ENCODE measurements at regions of chr6 and their contacts with region 1.

Region 1: GRCh38 chr6:42158011-42158410 is 15.2 kb upstream of the GUCA1A start:
- DNase-seq: peak in 1 of 2 experiments; percentile 46
- H3K4me3 ChIP-seq: no peak overlapping the region
- H3K27ac ChIP-seq: no peak overlapping the region
- H3K4me1 ChIP-seq: peaks cover 16% of the 10 kb centered on the region
- H3K27me3 ChIP-seq: no peaks in the 10 kb centered on the region
- CTCF ChIP-seq: no peak

Region 2: DNA sequence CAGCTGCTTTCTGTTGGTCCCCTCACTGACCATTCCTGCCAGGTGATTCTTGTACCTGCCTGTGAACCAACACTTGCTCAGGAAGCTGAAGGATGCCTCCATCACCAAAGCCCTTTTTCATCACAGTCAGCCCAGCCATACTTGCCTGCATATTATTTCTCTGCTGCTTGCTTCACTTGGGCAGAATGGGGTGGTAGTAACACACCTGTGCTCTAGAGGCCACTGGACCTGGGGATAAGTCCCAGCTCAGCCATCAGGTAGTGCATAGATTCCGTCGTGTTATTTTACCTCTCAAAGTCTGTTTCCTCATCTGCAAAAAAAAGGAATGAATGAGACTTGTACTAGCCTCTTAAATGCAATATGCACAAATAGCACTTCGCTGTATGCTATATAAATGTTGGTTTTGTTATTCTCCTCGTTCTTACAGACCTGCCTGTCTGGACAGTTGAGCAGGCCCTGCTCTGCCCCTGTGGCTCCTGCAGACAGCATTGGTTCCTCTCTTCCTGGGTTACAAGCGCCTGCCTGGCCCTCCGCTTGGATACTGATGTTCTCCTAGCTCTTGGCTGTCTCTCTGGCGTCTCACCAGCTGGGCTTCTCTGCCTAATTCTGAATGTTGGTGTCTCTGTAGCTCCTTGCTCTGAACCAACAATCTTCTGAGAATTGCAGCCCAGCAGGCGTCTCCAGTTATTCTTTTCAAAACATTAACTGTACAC is 1270.8 kb before region 1 on chr6:
- CTCF ChIA-PET with region 1: no interaction called
- POLR2A ChIA-PET with region 1: no interaction called
- intact Hi-C with region 1: no loop called
- DNase-seq: no peak
- H3K4me3 ChIP-seq: no peak overlapping the region
- H3K27ac ChIP-seq: no peak overlapping the region
- H3K4me1 ChIP-seq: no peaks in the 10 kb centered on the region
- H3K27me3 ChIP-seq: peaks cover 91% of the 10 kb centered on the region
- CTCF ChIP-seq: no peak

Region 3: DNA sequence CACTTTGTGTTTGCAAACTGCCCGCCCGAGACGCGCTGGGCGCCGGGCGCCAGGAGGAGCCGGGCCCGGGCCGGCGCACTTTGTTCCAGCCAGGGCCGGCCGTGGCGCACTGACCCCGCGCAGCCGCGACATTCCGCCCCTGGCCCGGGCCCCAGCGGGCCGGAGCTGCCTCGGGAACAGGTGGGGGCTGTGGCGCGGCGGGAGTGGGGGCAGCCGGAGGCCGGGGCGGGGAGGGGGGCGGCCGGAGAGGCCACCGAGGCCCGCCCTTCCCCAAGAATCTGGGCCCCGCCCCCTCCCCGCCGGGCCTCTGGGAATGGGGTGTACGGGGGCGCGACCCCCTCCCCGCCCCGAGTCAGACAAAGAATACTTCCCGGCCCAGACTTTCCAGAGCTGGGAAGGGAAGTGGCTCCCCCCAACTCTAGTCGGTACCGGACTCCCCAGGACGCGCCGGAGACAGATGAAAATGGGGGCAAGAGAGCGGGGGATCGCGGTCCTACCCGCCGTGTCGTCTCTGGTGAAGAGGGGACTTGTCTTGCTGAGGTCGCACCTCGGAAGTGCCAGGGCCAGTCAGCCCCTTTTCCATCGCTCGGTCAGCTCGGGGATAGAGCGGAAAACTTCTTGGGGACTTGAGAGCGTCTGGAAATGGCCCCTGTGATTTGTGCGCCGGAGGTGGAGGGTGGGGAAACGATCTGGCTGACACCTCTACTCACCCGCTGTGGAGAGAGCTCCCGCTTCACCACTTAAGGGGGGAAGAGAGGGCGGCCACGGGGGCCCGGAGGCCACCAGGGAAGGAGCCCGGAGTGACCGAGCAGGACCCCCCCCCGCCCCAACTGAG is 610.8 kb before region 1 on chr6:
- CTCF ChIA-PET with region 1: no interaction called
- POLR2A ChIA-PET with region 1: no interaction called
- intact Hi-C with region 1: no loop called
- DNase-seq: peak in 1 of 2 experiments; percentile 37
- H3K4me3 ChIP-seq: peak overlapping the region; percentile 67
- H3K27ac ChIP-seq: no peak overlapping the region
- H3K4me1 ChIP-seq: no peaks in the 10 kb centered on the region
- H3K27me3 ChIP-seq: no peaks in the 10 kb centered on the region
- CTCF ChIP-seq: no peak

Region 4: DNA sequence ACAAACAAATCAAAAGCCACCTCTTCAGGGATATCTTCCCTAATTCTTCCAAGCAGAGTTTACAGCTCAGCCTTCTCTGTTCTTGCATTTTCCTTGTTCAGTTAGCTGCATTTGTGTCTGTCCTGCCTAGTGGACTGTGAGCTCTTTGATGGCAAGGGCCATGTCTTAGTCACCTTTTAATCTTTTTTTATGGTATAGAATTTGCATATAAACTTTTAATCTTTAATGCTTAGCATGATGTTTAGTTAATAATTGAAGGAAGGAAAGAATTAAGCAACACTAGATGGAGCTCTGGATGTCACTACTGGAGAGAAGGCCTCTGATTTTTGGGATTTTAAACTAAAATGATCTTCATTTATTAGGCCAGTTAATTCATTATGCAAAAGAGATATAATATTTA is 838.5 kb after region 1 on chr6:
- CTCF ChIA-PET with region 1: interaction called, 16 read pairs
- POLR2A ChIA-PET with region 1: no interaction called
- intact Hi-C with region 1: no loop called
- DNase-seq: no peak
- H3K4me3 ChIP-seq: no peak overlapping the region
- H3K27ac ChIP-seq: no peak overlapping the region
- H3K4me1 ChIP-seq: no peaks in the 10 kb centered on the region
- H3K27me3 ChIP-seq: no peaks in the 10 kb centered on the region
- CTCF ChIP-seq: no peak